K562 (cell line): ENCODE measurements at regions of chr17 and their contacts with region 1.

Region 1: DNA sequence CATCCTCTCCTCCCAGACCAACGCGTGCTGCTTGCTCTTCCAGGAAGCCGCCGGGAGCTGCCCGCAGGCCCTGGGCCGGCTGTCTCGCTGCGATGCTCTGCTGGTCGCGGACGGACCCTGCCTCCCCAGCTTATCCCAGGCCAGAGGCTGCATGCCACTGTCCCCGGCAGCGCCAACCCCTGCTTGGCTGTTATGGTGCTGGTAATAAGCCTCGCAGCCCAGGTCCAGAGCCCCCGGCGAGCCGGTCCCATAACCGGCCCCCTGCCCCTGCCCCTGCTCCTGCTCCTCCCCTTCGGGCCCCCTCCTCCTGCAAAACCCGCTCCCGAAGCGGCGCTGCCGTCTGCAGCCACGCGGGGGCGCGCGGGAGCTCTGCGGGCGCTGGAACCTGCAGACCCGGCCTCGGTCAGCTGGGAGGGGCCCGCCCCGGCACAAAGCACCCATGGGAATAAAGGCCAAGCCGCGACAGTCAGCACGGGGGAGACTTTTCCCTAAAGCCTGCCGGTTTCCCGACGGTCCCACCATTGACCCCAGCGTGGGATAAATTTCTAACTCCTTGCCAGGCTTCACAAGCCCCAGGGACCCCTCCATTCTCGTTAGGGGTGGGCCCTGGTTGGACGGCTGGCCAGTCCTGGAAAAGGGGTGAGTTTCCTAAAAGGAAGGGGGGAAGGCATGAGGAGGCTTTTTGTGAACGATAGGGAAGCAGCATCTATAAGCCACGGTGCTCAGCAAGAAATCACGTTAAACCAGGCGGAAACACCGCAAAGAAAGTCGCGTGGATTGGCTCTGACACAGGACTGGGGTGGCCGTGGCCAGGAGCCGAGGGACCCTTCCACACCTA is 11.2 kb downstream of the ENPP7 start:
- DNase-seq: peak; percentile 84 to 93 (median 92)
- ATAC-seq: peak; percentile 89
- H3K4me3 ChIP-seq: no peak overlapping the region
- H3K27ac ChIP-seq: no peak overlapping the region
- H3K4me1 ChIP-seq: peaks cover 4 to 33% of the 10 kb centered on the region in 2 experiments; a peak in 4 of 5 replicates
- H3K27me3 ChIP-seq: peaks cover 29 to 37% of the 10 kb centered on the region in 2 experiments
- CTCF ChIP-seq: peak; percentile 87 to 96 (median 88)
- EP300 ChIP-seq: no peak
- POLR2A ChIP-seq: no peak
- RAD21 ChIP-seq: peak; percentile 55 to 77

Region 2: GRCh38 chr17:79630821-79631639 is 110.9 kb before region 1 on chr17:
- CTCF ChIA-PET with region 1: no interaction called
- POLR2A ChIA-PET with region 1: no interaction called
- in situ Hi-C with region 1: no loop called
- intact Hi-C with region 1: no loop called
- DNase-seq: no peak
- ATAC-seq: no peak
- H3K4me3 ChIP-seq: no peak overlapping the region
- H3K27ac ChIP-seq: no peak overlapping the region
- H3K4me1 ChIP-seq: no peaks in the 10 kb centered on the region
- H3K27me3 ChIP-seq: peaks cover 34 to 85% of the 10 kb centered on the region in 2 experiments
- CTCF ChIP-seq: no peak
- EP300 ChIP-seq: no peak
- POLR2A ChIP-seq: no peak
- RAD21 ChIP-seq: no peak

Region 3: GRCh38 chr17:79777894-79778503 is 36.0 kb after region 1 on chr17 and contains the start of gene CBX2:
- CTCF ChIA-PET with region 1: interaction called, 8 read pairs
- POLR2A ChIA-PET with region 1: interaction called, 3 read pairs
- in situ Hi-C with region 1: no loop called
- intact Hi-C with region 1: loop called (anchors 5 kb)
- DNase-seq: peak; percentile 88 to 98 (median 96)
- ATAC-seq: peak; percentile 75
- H3K4me3 ChIP-seq: peak within 1 kb of the TSS; percentile 77
- H3K27ac ChIP-seq: peak within 1 kb of the TSS; percentile 77
- H3K4me1 ChIP-seq: peaks cover 23 to 38% of the 10 kb centered on the region in 2 experiments
- H3K27me3 ChIP-seq: no peaks in the 10 kb centered on the region
- CTCF ChIP-seq: no peak
- EP300 ChIP-seq: no peak
- POLR2A ChIP-seq: no peak
- RAD21 ChIP-seq: no peak
- polyA plus RNA-seq, gene CBX2: 0.66 to 1.0 TPM

Region 4: GRCh38 chr17:79915850-79916430 is 174.0 kb after region 1 on chr17:
- CTCF ChIA-PET with region 1: interaction called, 14 read pairs
- POLR2A ChIA-PET with region 1: no interaction called
- in situ Hi-C with region 1: loop called (anchors 10 kb)
- intact Hi-C with region 1: loop called (anchors 2 kb)
- DNase-seq: peak; percentile 71 to 84 (median 82)
- ATAC-seq: peak; percentile 90
- H3K4me3 ChIP-seq: no peak overlapping the region
- H3K27ac ChIP-seq: no peak overlapping the region
- H3K4me1 ChIP-seq: peaks cover 0 to 22% of the 10 kb centered on the region in 2 experiments; a peak in 2 of 5 replicates
- H3K27me3 ChIP-seq: peaks cover 2 to 70% of the 10 kb centered on the region in 2 experiments; a peak in 3 of 5 replicates
- CTCF ChIP-seq: peak; percentile 66 to 81 (median 72)
- EP300 ChIP-seq: no peak
- POLR2A ChIP-seq: no peak
- RAD21 ChIP-seq: peak; percentile 88 to 92